Activated CD4-positive, alpha-beta T cell treated with anti-CD3 and anti-CD28 coated beads for 36 hours (primary cell): ENCODE measurements at regions of chr1 and their contacts with region 1.

Region 1: DNA sequence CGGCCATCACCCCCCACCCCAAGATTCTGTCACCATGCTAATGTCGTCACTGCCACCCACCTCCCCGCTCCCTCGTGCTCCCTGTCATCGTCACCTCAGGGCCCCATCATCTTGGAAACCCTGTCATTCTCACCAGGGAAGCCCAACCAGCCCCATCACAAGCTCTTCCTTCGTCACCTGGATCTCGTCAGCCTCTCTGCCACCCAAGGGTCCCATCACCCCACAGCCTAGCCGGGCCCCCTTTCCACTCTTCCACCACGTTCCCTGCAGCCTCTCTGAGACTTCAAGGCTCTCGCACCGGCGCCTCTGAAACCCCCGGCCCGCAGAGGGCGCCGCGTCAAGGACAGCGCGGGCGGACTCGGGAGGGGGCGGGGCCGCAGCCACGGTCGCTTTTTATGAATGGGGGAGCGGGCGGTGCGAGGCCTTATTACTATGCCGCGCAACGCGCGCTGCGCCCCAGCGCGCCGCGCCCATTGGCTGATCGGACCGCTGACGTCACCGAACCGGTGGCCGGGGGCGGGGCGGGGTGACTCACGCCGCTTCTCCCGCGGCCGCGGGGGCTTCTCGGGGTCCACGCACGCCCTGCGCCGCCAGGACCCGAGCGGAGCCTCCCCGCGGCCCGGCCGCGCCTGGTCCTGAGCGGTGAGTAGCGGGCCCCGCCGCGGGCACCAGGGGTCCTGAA is at the start of gene GPR3:
- DNase-seq: peak; percentile 97
- ATAC-seq: peak; percentile 91
- H3K4me3 Mint-ChIP-seq: peak within 1 kb of the TSS; percentile 70
- H3K27ac Mint-ChIP-seq: peak within 1 kb of the TSS; percentile 92
- H3K4me1 Mint-ChIP-seq: peaks cover 14% of the 10 kb centered on the region
- H3K27me3 Mint-ChIP-seq: no peaks in the 10 kb centered on the region
- total RNA-seq, gene GPR3: 1.1 to 1.3 TPM

Region 2: GRCh38 chr1:27234049-27234882 is 158.0 kb before region 1 on chr1 and contains the start of gene WDTC1:
- CTCF ChIA-PET with region 1: interaction called, 3 read pairs
- POLR2A ChIA-PET with region 1: no interaction called
- intact Hi-C with region 1: loop called in 1 of 2 experiments (anchors 1 kb)
- DNase-seq: peak; percentile 99
- ATAC-seq: peak; percentile 95
- H3K4me3 Mint-ChIP-seq: peak within 1 kb of the TSS; percentile 95
- H3K27ac Mint-ChIP-seq: peak within 1 kb of the TSS; percentile 93
- H3K4me1 Mint-ChIP-seq: peaks cover 27% of the 10 kb centered on the region
- H3K27me3 Mint-ChIP-seq: no peaks in the 10 kb centered on the region
- total RNA-seq, gene WDTC1: 19.3 to 21.9 TPM

Region 3: GRCh38 chr1:27332536-27333281 is 59.5 kb before region 1 on chr1:
- CTCF ChIA-PET with region 1: interaction called, 30 read pairs
- POLR2A ChIA-PET with region 1: no interaction called
- intact Hi-C with region 1: loop called (anchors 1 to 2 kb)
- DNase-seq: peak; percentile 72
- ATAC-seq: peak; percentile 91
- H3K4me3 Mint-ChIP-seq: no peak overlapping the region
- H3K27ac Mint-ChIP-seq: no peak overlapping the region
- H3K4me1 Mint-ChIP-seq: peaks cover 27% of the 10 kb centered on the region
- H3K27me3 Mint-ChIP-seq: no peaks in the 10 kb centered on the region

Region 4: GRCh38 chr1:27416387-27417111 is 24.3 kb after region 1 on chr1:
- CTCF ChIA-PET with region 1: interaction called, 11 read pairs
- POLR2A ChIA-PET with region 1: no interaction called
- intact Hi-C with region 1: no loop called
- DNase-seq: peak; percentile 69
- ATAC-seq: peak; percentile 64
- H3K4me3 Mint-ChIP-seq: no peak overlapping the region
- H3K27ac Mint-ChIP-seq: peak overlapping the region; percentile 40
- H3K4me1 Mint-ChIP-seq: peaks cover 40% of the 10 kb centered on the region
- H3K27me3 Mint-ChIP-seq: no peaks in the 10 kb centered on the region

Region 5: GRCh38 chr1:27436204-27437159 is 44.2 kb after region 1 on chr1:
- CTCF ChIA-PET with region 1: no interaction called
- POLR2A ChIA-PET with region 1: no interaction called
- intact Hi-C with region 1: no loop called
- DNase-seq: no peak
- ATAC-seq: peak; percentile 64
- H3K4me3 Mint-ChIP-seq: no peak overlapping the region
- H3K27ac Mint-ChIP-seq: peak overlapping the region; percentile 73
- H3K4me1 Mint-ChIP-seq: peaks cover 72% of the 10 kb centered on the region
- H3K27me3 Mint-ChIP-seq: no peaks in the 10 kb centered on the region

Region 6: GRCh38 chr1:27568300-27569087 is 176.3 kb after region 1 on chr1:
- CTCF ChIA-PET with region 1: no interaction called
- POLR2A ChIA-PET with region 1: no interaction called
- intact Hi-C with region 1: loop called in 1 of 2 experiments (anchors 1 kb)
- DNase-seq: peak; percentile 95
- ATAC-seq: peak; percentile 97
- H3K4me3 Mint-ChIP-seq: peak overlapping the region; percentile 39
- H3K27ac Mint-ChIP-seq: no peak overlapping the region
- H3K4me1 Mint-ChIP-seq: peaks cover 18% of the 10 kb centered on the region
- H3K27me3 Mint-ChIP-seq: no peaks in the 10 kb centered on the region